ENCODE measurements at regions of chrX and their contacts with region 1.

Region 1: GRCh38 chrX:9285342-9285771 is 179.5 kb upstream of the TBL1X start:
- DNase-seq: peak; percentile 80
- ATAC-seq: peak; percentile 97
- H3K4me3 Mint-ChIP-seq: peak overlapping the region; percentile 16
- H3K27ac Mint-ChIP-seq: peak overlapping the region; percentile 85
- H3K4me1 Mint-ChIP-seq: peaks cover 17% of the 10 kb centered on the region
- H3K27me3 Mint-ChIP-seq: no peaks in the 10 kb centered on the region

Region 2: DNA sequence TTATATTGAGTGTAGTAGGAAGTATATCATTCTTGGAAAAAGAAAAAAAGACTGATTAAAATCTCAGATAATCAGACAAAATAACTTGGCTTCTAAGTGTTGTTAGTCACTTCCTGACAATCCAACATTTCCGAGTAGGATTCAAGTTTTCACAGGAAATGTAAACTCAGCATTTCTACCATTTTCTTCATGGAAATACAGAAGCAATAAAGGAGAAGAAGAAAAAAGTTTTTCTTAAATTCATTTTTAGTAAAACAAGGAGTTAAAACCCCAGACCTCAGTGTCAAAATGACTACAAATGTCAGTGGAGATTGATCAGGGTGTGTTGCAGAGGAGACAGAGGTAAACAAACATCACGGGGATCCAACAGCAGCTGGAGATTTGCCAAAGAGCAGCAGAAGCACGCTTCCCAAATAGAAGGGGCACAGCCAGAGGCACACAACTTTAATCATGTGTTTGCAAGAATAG is 122.1 kb before region 1 on chrX:
- CTCF ChIA-PET with region 1: no interaction called
- POLR2A ChIA-PET with region 1: no interaction called
- intact Hi-C with region 1: loop called (anchors 5 to 10 kb)
- DNase-seq: no peak
- ATAC-seq: no peak
- H3K4me3 Mint-ChIP-seq: no peak overlapping the region
- H3K27ac Mint-ChIP-seq: no peak overlapping the region
- H3K4me1 Mint-ChIP-seq: peaks cover 42% of the 10 kb centered on the region
- H3K27me3 Mint-ChIP-seq: peaks cover 2% of the 10 kb centered on the region

Region 3: GRCh38 chrX:9241427-9241826 is 43.9 kb before region 1 on chrX:
- CTCF ChIA-PET with region 1: no interaction called
- POLR2A ChIA-PET with region 1: no interaction called
- intact Hi-C with region 1: no loop called
- DNase-seq: no peak
- ATAC-seq: no peak
- H3K4me3 Mint-ChIP-seq: no peak overlapping the region
- H3K27ac Mint-ChIP-seq: no peak overlapping the region
- H3K4me1 Mint-ChIP-seq: no peaks in the 10 kb centered on the region
- H3K27me3 Mint-ChIP-seq: no peaks in the 10 kb centered on the region

Region 4: DNA sequence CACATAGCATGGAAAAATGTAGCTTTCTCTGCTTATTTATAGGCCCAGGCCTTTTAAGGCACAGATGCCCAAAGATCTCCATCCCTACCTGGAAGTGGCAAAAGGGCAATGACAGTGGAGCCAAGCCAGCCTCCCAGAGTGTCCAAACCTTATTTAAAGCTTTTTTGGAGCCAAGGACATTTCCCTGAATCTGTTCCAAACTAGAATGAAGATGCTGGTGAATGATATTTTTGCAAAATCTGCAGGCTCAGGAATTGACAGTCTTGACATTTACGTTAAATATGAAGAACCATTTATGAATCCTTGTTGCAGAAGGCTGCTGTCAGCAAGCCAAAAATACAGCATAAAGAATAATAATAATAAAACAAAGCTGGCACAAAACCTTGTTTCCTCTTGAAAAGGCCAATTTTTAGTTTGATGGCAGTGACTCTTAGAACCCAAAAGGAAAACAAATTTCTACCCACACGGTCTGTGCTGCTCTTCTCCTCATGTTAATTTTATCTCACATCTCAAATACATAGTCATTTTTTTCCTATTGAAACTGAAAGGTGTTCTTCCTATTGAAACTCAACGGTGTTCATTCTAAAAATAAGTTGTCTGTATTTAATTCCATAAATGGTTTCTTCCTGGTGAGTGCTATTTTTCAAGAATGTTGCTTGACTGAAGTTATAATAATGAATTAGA is 26.8 kb before region 1 on chrX:
- CTCF ChIA-PET with region 1: interaction called, 3 read pairs
- POLR2A ChIA-PET with region 1: no interaction called
- intact Hi-C with region 1: loop called in 1 of 2 experiments (anchors 2 kb)
- DNase-seq: no peak
- ATAC-seq: no peak
- H3K4me3 Mint-ChIP-seq: no peak overlapping the region
- H3K27ac Mint-ChIP-seq: no peak overlapping the region
- H3K4me1 Mint-ChIP-seq: peaks cover 38% of the 10 kb centered on the region
- H3K27me3 Mint-ChIP-seq: no peaks in the 10 kb centered on the region

Region 5: DNA sequence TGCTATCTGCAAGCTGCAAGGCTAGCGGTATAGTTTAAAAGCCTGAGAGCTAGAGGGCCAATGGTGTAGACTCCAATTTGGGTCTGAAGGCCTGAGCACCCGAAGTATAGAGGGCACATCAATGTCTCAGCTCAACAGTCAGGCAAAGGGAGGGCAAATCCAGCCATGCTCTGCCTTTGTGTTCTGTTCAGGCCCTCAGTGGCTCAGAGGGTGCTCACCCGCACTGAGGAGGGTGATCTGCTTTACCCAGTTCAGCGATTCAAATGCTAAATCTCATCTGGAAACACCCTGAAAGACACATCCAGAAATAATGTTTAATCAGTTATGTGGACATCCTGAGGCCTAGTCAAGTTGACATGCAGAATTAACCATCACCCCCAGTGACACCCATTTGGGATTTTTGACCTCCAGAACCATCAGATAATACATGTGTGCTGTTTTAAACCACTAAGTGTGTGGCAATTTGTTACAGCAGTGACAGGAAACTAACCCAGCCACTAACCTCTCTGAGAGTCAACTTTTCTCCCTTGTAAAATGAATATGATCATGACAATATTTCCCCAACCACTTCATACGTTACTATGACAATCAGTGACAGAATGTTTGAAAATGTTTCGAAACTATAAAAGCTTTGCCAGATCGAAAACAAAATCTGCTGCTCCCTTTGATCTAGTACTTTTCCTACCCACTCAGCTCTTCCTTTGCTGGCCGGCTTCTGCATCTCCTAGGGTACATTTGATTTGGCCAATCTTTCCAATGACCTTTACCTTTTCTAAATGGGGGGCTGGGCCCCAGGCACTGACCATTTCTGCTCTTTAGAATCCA is 171.1 kb after region 1 on chrX:
- CTCF ChIA-PET with region 1: no interaction called
- POLR2A ChIA-PET with region 1: no interaction called
- intact Hi-C with region 1: loop called in 1 of 2 experiments (anchors 1 kb)
- DNase-seq: peak; percentile 49
- ATAC-seq: peak; percentile 89
- H3K4me3 Mint-ChIP-seq: peak overlapping the region; percentile 39
- H3K27ac Mint-ChIP-seq: peak overlapping the region; percentile 80
- H3K4me1 Mint-ChIP-seq: peaks cover 37% of the 10 kb centered on the region
- H3K27me3 Mint-ChIP-seq: no peaks in the 10 kb centered on the region

Region 6: DNA sequence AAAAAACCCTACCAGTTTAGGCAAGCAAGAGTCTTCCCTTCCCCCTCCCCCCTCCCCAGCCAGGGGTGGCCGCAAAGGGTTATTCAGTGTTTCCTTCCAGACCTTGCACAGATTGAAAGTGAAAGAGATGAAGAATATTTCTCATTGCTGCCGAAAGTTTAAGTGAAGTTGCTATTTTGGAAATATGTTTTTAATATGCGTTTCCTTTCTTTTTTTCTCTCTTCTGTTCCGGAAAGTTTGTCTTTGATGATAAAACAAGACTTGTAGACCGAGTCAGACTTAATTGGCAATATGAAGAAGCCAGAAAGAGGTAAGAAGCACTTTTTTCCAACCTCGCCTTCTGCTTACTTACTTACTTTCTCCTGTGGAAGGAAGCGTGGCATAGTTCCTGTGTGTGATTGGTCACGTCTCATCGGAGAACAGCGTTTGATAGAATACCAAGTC is 812.9 kb after region 1 on chrX:
- CTCF ChIA-PET with region 1: no interaction called
- POLR2A ChIA-PET with region 1: no interaction called
- intact Hi-C with region 1: loop called in 1 of 2 experiments (anchors 5 kb)
- DNase-seq: peak; percentile 81
- ATAC-seq: peak; percentile 71
- H3K4me3 Mint-ChIP-seq: peak overlapping the region; percentile 67
- H3K27ac Mint-ChIP-seq: peak overlapping the region; percentile 94
- H3K4me1 Mint-ChIP-seq: peaks cover 49% of the 10 kb centered on the region
- H3K27me3 Mint-ChIP-seq: no peaks in the 10 kb centered on the region

Measured in activated CD4-positive, alpha-beta T cell treated with anti-CD3 and anti-CD28 coated beads for 36 hours (primary cell).